Tibial artery (tissue), 4 donors: ENCODE measurements at regions of chr17 and their contacts with region 1.

Region 1: GRCh38 chr17:12744298-12744697 is 45.0 kb upstream of the ARHGAP44 start:
- DNase-seq: no peak
- H3K4me3 ChIP-seq: no peak overlapping the region
- H3K27ac ChIP-seq: peak overlapping the region in 1 of 2 donors; percentile 5
- H3K4me1 ChIP-seq: peaks cover 0 to 22% (median 10%) of the 10 kb centered on the region in 4 donors
- H3K27me3 ChIP-seq: no peaks in the 10 kb centered on the region
- CTCF ChIP-seq: no peak

Region 2: GRCh38 chr17:12180644-12181261 is 563.5 kb before region 1 on chr17:
- intact Hi-C with region 1: loop called (anchors 5 kb)
- DNase-seq: no peak
- H3K4me3 ChIP-seq: no peak overlapping the region
- H3K27ac ChIP-seq: no peak overlapping the region
- H3K4me1 ChIP-seq: peaks cover 0 to 4% (median 0%) of the 10 kb centered on the region in 4 donors
- H3K27me3 ChIP-seq: no peaks in the 10 kb centered on the region
- CTCF ChIP-seq: peak; percentile 80 to 87

Region 3: GRCh38 chr17:12250973-12251372 is 493.3 kb before region 1 on chr17:
- intact Hi-C with region 1: loop called (anchors 5 kb)
- DNase-seq: no peak
- H3K4me3 ChIP-seq: no peak overlapping the region
- H3K27ac ChIP-seq: no peak overlapping the region
- H3K4me1 ChIP-seq: peaks cover 0 to 5% (median 0%) of the 10 kb centered on the region in 4 donors
- H3K27me3 ChIP-seq: no peaks in the 10 kb centered on the region
- CTCF ChIP-seq: no peak